ENCODE measurements at regions of chr11 and their contacts with region 1.

Region 1: DNA sequence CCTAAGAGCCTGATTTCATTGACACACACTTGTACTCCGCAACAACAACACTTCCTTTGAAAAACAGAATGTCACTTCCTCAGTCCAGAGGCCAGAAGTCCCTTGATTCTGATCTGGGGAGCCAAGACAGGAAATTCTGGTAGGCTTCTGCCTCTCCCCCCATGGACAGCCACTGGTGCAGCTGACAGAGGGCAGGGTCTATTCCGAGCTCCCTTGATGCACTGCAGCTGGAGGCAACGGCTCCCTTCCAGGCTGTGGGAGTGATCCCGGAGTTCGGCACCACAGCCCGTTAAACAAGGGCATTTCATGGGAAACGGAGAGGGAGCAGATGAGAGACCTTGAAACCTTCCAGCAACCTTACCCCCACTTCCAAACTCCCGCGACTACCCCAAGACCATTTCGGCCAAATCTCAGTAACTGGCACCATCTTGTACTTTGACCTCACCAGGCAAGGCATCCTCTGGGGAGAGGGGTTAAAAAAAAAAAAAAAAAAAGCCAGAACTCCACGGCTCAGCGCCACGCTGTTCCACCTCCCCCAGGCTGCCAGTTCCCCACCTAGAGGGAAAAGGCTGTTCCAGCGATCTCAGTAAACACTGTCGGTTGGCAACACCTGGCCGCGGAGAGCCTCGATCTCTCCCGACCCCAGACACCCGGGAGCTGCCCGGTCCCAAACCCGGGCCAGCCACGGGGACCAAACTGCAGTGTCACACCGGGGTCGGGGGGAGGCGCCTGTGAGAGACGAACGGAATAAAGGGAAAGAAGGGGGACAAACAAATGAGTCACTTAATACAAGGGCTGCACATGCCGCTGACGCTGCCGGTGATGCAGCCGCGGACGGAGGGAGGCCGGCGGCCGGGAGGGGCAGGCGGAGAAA is 1.1 kb downstream of the GAB2 start:
- DNase-seq: peak; percentile 66 to 78
- ATAC-seq: peak; percentile 63 to 76
- H3K4me3 ChIP-seq: peak overlapping the region; percentile 65 to 82 (median 70)
- H3K27ac ChIP-seq: peak overlapping the region; percentile 81 to 96 (median 85)
- H3K4me1 ChIP-seq: peaks cover 15% of the 10 kb centered on the region in 2 donors
- H3K27me3 ChIP-seq: peaks cover 0 to 4% (median 0%) of the 10 kb centered on the region in 3 donors
- CTCF ChIP-seq: peak; percentile 18 to 45 (median 33)
- POLR2A ChIP-seq: peak; percentile 75 to 92

Region 2: DNA sequence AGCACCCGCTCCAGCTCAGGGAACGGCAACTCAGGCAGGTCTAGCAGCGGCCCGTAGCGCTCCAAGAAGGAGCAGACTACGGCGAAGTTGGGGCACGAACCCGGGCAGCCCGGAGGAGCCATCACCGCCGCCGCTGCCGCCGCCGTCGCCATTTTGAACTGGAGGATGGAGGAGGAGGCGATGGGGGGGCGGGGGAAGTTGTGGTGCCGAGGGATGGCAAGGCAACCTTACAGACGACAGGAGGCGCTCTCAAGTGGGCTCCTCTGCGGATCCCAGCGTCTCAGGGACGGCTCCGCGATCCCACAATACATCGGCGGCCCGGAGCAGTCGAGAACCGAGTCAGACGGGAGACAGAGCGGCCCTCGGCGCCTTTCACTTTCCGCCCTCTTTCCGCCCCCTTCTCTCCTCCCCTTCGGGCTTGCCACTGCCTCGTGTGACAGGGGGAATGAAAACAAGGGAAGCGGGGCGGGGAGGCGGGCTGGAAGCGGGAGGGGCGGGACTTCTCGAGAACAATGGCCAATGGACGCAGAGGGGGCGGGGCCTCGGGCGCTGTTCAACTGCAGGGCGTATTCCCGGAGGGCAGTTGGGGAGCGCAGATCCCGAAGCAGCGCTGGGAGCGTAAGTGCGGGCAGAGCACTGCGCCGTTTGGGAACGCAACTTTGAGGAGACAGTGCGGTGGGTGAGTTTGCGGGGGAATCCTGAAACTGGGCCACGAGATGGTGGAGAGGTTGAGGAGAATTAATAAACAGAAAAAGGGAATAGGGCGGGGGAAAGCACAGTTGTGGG is 595.8 kb before region 1 on chr11 and contains the starts of genes AAMDC and RSF1:
- in situ Hi-C with region 1: no loop called
- intact Hi-C with region 1: loop called (anchors 2 kb)
- DNase-seq: peak; percentile 98 to 99
- ATAC-seq: peak; percentile 84
- H3K4me3 ChIP-seq: peak within 1 kb of the TSS; percentile 92 to 97 (median 96)
- H3K27ac ChIP-seq: peak within 1 kb of the TSS; percentile 98 to 99 (median 99)
- H3K4me1 ChIP-seq: peaks cover 51 to 53% of the 10 kb centered on the region in 2 donors
- H3K27me3 ChIP-seq: no peaks in the 10 kb centered on the region
- CTCF ChIP-seq: peak; percentile 25 to 71 (median 58)
- POLR2A ChIP-seq: peak; percentile 82 to 96
- total RNA-seq, gene AAMDC: 32.4 to 70.3 (median 48.3) TPM
- total RNA-seq, gene RSF1: 17.9 to 48.4 (median 45.7) TPM

Region 3: DNA sequence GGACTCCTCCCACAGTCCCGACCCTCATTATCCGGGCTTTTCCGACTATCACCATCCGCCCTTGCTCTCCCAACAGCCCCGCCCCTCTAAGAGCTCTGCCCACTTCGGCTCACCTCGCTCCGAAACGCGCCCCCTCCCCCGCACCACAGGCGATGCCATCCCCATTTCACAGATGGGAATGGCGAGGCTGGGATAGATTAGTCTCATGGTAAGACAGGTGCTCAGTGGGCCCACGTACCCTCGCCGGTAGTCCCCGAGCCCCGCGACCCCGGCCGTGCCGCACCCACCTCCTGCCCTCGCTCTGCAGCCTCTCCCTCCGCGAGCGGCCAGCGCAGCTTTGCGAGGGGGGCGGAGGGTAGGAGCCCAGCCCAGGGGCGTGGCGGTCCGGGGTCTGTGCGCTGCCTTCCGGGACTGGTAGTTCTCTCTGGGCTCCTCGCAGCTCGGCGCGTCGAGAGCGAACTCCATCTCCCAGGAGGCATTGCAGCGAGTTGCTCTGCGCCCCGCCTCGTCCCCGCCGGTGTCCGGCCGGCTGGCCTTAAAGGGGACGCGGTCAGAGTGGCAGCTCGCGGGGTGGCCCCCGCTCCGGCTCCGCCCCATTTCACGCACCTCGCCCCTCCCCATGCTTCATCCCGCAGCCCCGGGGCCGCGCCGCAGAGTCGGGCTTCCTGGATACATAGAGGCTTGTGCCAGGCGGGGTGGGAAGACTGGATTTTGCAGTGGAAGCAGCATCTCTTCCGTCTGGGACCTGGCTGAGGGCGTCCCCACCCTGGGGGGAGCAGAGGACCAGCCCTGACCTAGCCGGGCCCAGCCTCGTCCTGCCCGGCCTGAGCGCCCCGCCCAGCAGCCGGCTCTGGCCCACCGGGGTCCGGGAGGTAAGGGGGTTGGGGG is 228.0 kb before region 1 on chr11 and contains the starts of genes KCTD21 and USP35:
- in situ Hi-C with region 1: no loop called
- intact Hi-C with region 1: loop called (anchors 1 kb)
- DNase-seq: peak; percentile 96
- ATAC-seq: peak; percentile 88 to 92
- H3K4me3 ChIP-seq: peak within 1 kb of the TSS; percentile 63 to 100 (median 99)
- H3K27ac ChIP-seq: peak within 1 kb of the TSS; percentile 71 to 94 (median 86)
- H3K4me1 ChIP-seq: peaks cover 37 to 49% of the 10 kb centered on the region in 2 donors
- H3K27me3 ChIP-seq: no peaks in the 10 kb centered on the region
- CTCF ChIP-seq: no peak
- POLR2A ChIP-seq: peak; percentile 80 to 90
- total RNA-seq, gene KCTD21: 6.0 to 18.9 (median 15.8) TPM
- total RNA-seq, gene USP35: 4.6 to 6.1 (median 5.4) TPM

Region 4: DNA sequence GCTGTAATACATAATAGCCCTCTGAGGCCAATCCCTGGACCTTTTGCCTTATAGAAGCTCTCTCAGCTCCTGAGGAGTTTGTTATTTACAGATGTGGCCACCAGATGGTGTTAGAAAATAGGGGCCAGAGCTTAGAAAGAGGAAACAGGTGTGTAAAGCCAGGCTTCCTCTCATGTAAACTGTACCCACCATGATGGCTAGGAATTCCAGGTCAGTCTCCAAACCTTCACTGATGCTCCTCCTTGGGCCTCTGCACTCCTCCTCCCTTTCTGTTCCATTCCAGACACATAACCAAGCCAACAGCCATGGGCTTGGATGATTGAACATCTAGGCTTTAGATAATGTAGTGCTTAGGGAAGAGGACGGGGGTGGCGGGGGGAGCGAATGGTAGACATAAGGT is 188.1 kb before region 1 on chr11:
- in situ Hi-C with region 1: loop called in 2 of 4 experiments (anchors 25 kb)
- intact Hi-C with region 1: loop called (anchors 1 kb)
- DNase-seq: no peak
- ATAC-seq: peak in 1 of 2 donors; percentile 60
- H3K4me3 ChIP-seq: no peak overlapping the region
- H3K27ac ChIP-seq: no peak overlapping the region
- H3K4me1 ChIP-seq: peaks cover 21% of the 10 kb centered on the region in 2 donors
- H3K27me3 ChIP-seq: no peaks in the 10 kb centered on the region
- CTCF ChIP-seq: peak in 4 of 5 experiments; percentile 45 to 66 (median 58)
- POLR2A ChIP-seq: no peak

Region 5: GRCh38 chr11:78290293-78291176 is 126.0 kb before region 1 on chr11:
- in situ Hi-C with region 1: no loop called
- intact Hi-C with region 1: no loop called
- DNase-seq: peak; percentile 30 to 41
- ATAC-seq: peak; percentile 83 to 96
- H3K4me3 ChIP-seq: no peak overlapping the region
- H3K27ac ChIP-seq: peak overlapping the region; percentile 44 to 79 (median 56)
- H3K4me1 ChIP-seq: peaks cover 0 to 4% of the 10 kb centered on the region in 2 donors
- H3K27me3 ChIP-seq: no peaks in the 10 kb centered on the region
- CTCF ChIP-seq: no peak
- POLR2A ChIP-seq: no peak

Region 6: GRCh38 chr11:78476066-78476465 is 59.5 kb after region 1 on chr11:
- in situ Hi-C with region 1: no loop called
- intact Hi-C with region 1: no loop called
- DNase-seq: no peak
- ATAC-seq: no peak
- H3K4me3 ChIP-seq: no peak overlapping the region
- H3K27ac ChIP-seq: no peak overlapping the region
- H3K4me1 ChIP-seq: no peaks in the 10 kb centered on the region
- H3K27me3 ChIP-seq: no peaks in the 10 kb centered on the region
- CTCF ChIP-seq: no peak
- POLR2A ChIP-seq: no peak

Region 7: DNA sequence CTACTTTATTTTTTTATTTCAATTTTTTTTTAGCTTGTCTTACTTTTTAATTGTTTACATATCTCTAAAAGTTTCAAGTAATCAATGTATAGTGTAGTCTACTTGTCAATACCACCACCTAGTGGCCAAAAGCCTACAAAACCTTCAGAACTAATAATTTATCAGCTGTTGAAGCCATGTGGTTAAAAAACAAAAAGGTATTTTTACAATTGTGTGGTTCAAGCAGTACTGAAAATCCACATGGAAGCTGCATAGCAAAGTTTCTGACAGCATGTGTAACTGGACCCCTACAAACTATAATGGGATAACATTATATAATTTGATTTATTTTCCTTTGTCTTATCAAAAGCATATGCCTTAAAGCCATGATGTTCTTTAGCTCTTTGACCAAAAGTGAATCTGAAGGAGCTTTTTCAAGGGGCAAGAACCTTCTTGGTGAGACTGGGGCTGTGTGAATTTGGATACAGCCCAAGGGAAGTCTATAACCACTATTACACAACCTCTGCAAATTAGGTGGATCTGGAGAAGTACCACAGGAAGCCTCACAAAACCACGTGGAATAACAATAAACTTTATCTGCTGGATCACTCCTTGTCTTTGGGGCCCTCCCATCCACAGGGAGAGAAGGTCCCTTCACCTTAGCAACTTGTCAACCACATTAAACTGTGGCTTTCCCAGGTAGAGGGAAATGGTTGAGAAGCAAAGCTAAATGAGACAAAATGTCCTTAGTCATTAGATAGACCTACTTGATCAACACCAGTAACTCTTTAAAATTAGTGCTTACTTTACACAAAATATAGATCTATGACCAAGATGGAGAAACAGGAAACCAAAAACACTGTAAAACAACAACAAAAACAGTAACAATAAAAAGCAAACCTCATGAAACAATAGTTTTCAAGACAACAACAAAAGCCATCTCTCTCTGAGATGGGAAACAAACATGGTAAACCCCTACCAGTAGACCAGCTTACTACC is 148.2 kb after region 1 on chr11:
- in situ Hi-C with region 1: loop called in 3 of 4 experiments (anchors 5 to 10 kb)
- intact Hi-C with region 1: loop called (anchors 5 kb)
- DNase-seq: no peak
- ATAC-seq: no peak
- H3K4me3 ChIP-seq: no peak overlapping the region
- H3K27ac ChIP-seq: no peak overlapping the region
- H3K4me1 ChIP-seq: peaks cover 4 to 11% of the 10 kb centered on the region in 2 donors
- H3K27me3 ChIP-seq: no peaks in the 10 kb centered on the region
- CTCF ChIP-seq: peak; percentile 50 to 78 (median 60)
- POLR2A ChIP-seq: no peak

Region 8: DNA sequence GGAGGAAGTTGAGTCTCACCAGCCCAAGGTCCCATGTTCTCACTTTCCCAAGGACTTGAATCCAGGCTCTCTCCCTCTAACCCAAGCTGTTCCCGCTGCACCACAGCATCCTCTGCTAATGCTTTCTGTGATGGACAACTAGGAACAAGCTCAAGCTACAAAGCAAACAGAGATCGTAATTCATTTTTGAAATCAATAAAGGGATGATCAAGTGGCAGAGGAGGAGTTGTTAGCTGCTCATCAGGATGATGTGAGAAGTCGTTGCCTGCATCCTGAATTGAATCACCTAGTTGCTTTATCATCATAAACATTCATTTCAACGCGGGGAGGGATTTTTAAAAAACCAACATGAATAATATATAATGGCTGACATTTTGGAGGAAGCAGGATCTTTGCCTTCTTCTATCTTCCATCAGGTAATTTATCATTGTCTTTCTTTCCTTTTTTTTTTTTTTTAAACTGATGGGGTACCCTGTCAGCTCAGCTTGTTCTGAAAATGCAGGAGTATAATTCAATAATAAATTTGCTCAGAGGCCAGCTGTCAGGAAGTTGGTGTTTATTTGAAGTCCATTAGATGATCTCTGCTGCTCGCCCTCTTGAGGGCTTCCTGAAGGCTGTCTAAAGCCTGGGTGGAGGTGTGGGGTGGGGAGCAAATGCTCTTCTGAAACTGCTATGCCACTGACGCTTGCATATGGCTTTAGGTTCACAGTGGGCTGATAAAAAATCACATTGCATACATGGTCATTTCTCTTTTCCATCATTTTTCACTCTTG is 332.6 kb after region 1 on chr11:
- in situ Hi-C with region 1: no loop called
- intact Hi-C with region 1: no loop called
- DNase-seq: no peak
- ATAC-seq: no peak
- H3K4me3 ChIP-seq: no peak overlapping the region
- H3K27ac ChIP-seq: no peak overlapping the region
- H3K4me1 ChIP-seq: no peaks in the 10 kb centered on the region
- H3K27me3 ChIP-seq: no peaks in the 10 kb centered on the region
- CTCF ChIP-seq: no peak
- POLR2A ChIP-seq: no peak

Region 9: DNA sequence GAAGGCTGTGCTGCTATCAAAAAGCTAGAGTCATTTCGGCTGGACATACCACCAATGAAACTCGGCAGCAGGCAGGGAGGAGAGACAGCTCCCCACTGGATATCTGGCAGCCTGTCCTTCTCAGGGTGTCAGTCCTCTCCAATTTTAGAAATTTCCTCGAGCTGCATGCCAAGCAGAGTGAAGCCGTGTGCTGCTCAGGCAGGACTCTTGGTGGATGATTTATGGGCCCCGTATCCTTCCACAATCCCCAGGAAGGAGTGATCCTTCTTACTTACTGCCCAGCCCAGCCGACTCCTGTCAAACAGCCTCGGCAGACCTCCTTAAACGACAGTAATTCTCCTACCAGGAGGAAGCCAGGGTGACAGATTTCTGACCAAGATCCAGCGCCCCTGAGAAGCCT is 613.9 kb after region 1 on chr11:
- in situ Hi-C with region 1: no loop called
- intact Hi-C with region 1: no loop called
- DNase-seq: no peak
- ATAC-seq: peak; percentile 27 to 36
- H3K4me3 ChIP-seq: no peak overlapping the region
- H3K27ac ChIP-seq: no peak overlapping the region
- H3K4me1 ChIP-seq: peaks cover 6 to 11% of the 10 kb centered on the region in 2 donors
- H3K27me3 ChIP-seq: no peaks in the 10 kb centered on the region
- CTCF ChIP-seq: no peak
- POLR2A ChIP-seq: no peak

Measured in gastrocnemius medialis (tissue), 4 donors.